Activated naive CD8-positive, alpha-beta T cell treated with anti-CD3 and anti-CD28 coated beads, Interleukin-2, amount 10 ng/mL, durations not matched to agents 7 days and 5 days (primary cell): ENCODE measurements at regions of chr22 and their contacts with region 1.

Region 1: GRCh38 chr22:46035742-46036557 is 59.0 kb upstream of the WNT7B start:
- DNase-seq: peak; percentile 100
- ATAC-seq: peak; percentile 92
- H3K4me3 Mint-ChIP-seq: peak overlapping the region; percentile 88
- H3K27ac Mint-ChIP-seq: peak overlapping the region; percentile 92
- H3K4me1 Mint-ChIP-seq: peaks cover 16% of the 10 kb centered on the region
- H3K27me3 Mint-ChIP-seq: no peaks in the 10 kb centered on the region

Region 2: DNA sequence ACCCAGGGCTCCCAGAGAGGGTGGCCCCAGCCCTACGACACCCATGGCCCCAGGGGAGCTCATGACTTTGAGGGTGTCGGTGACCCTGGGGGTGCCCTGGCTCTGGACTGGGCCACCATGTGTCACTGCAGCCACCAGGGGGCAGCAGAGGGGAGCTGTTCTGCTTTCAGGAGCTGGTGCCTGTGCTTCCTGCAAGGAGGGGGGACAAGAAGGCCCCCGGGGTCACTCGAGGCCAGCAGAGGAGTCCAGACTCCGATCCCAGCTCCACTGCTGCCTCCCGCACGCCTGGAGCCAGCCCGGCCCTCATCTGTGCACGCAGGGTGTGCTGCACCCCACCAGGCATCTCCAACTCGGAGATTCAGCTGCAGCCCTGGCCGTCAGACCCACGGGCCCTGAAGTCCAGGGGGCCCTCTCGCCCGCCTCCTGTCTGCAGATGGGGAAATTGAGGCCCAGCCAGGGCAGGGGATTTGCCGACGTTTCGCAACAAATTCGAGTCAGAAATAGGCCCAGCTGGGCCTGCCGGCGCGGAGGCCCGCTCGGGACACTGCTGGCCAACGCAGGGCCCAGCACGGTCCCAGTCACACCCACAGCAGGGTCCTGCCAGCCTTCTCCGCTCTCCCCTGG is 29.5 kb before region 1 on chr22:
- POLR2A ChIA-PET with region 1: interaction called, 21 read pairs
- DNase-seq: peak; percentile 93
- ATAC-seq: peak; percentile 71
- H3K4me3 Mint-ChIP-seq: no peak overlapping the region
- H3K27ac Mint-ChIP-seq: no peak overlapping the region
- H3K4me1 Mint-ChIP-seq: peaks cover 16% of the 10 kb centered on the region
- H3K27me3 Mint-ChIP-seq: peaks cover 2% of the 10 kb centered on the region

Region 3: DNA sequence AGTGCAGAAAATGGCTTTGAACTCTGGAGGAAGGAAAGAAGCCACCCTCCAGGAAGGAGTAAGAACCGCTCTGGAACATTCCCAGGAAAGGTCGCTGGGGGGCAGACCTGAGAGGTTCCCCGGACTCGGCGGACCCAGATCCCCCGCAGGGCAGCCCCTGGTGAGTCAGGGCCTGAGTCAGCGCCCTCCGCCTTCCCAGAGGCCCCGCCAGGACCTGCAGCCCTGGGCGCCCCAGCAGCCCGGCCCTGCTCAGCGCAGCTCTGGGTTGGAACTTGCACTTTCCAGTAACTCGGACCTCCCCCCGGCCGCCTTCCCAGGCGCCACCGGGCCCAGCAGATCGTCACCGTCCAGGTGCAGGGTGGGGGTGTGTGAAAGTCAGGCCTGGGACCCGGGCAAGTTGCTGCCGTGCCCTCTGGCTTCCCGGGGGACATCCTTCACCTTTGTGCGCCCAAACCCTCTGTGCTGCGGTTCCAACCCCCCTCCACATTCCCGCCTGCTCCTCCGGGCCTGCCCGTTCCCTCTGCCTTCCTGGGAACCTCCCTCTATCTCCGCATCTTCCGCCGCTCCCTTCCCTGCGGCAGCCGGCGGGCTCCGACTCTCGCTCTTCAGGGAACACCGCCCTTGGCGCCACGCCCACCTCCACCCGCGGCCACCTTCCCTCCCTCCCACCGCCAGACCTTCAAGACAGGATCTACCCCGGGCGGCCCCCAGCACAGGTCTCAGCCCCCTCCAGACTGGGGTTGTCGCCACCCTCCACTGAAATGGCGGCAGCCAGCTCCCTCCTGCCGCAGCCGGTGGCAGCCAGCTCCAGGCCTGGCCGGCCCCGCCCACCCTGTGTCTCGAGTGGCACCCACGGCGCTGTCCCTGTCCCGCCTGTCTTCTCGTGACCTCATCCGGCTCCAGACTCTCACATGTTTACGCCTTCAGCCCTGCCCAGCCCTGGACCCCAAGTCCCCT is 22.2 kb before region 1 on chr22:
- POLR2A ChIA-PET with region 1: interaction called, 16 read pairs
- DNase-seq: peak; percentile 80
- ATAC-seq: peak; percentile 94
- H3K4me3 Mint-ChIP-seq: peak overlapping the region; percentile 83
- H3K27ac Mint-ChIP-seq: peak overlapping the region; percentile 82
- H3K4me1 Mint-ChIP-seq: peaks cover 4% of the 10 kb centered on the region
- H3K27me3 Mint-ChIP-seq: peaks cover 5% of the 10 kb centered on the region

Region 4: GRCh38 chr22:46057762-46058420 is 21.9 kb after region 1 on chr22:
- POLR2A ChIA-PET with region 1: interaction called, 28 read pairs
- DNase-seq: peak; percentile 47
- ATAC-seq: peak; percentile 82
- H3K4me3 Mint-ChIP-seq: peak overlapping the region; percentile 67
- H3K27ac Mint-ChIP-seq: peak overlapping the region; percentile 78
- H3K4me1 Mint-ChIP-seq: peaks cover 25% of the 10 kb centered on the region
- H3K27me3 Mint-ChIP-seq: no peaks in the 10 kb centered on the region

Region 5: GRCh38 chr22:46071451-46072109 is 35.6 kb after region 1 on chr22:
- POLR2A ChIA-PET with region 1: interaction called, 28 read pairs
- DNase-seq: no peak
- ATAC-seq: peak; percentile 14
- H3K4me3 Mint-ChIP-seq: peak overlapping the region; percentile 79
- H3K27ac Mint-ChIP-seq: peak overlapping the region; percentile 79
- H3K4me1 Mint-ChIP-seq: peaks cover 27% of the 10 kb centered on the region
- H3K27me3 Mint-ChIP-seq: no peaks in the 10 kb centered on the region